MCF 10A (cell line): ENCODE measurements at regions of chr5 and their contacts with region 1.

Region 1: DNA sequence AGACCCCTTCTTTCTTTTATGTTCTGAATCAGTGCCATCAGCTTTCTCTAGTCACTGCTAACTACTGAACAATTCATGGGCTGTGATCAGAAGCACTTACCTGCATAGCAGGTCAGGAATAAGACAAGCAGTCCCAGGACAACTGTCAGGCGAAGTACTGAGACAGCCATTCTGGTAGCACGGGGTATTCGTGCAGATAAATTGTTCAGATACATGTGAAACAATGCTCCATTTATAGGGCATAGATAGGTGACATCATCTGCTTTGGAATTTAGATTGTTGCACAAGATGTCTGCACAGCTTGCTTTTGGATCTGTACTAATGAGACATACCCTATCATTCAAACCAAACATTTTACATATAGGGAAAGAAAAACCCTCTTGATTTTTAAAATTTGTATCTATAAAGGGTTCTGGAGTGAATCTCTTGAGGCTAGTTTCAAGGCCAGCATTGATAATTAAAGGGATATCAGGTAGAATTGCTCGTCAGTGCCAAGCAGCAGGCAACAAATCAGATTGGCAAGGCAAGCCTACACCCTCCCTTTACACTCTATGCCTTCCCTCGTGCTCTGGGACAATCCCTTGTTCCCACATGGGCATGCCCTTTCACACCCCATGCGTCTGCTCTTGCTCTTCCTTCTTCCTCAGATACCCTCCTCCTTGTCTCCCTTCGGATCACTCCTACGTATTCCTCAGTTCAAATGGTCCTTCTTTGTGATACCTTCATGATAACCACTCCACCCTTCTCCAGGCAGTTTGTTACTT is at the start of gene C5orf46:
- DNase-seq: peak; percentile 75
- H3K4me3 Mint-ChIP-seq: peak within 1 kb of the TSS; percentile 69
- H3K27ac Mint-ChIP-seq: peak within 1 kb of the TSS; percentile 85
- H3K4me1 Mint-ChIP-seq: peaks cover 39% of the 10 kb centered on the region
- H3K27me3 Mint-ChIP-seq: no peaks in the 10 kb centered on the region
- CTCF ChIP-seq: no peak
- total RNA-seq, gene C5orf46: 2.1 and 5.7 TPM in 2 replicates

Region 2: DNA sequence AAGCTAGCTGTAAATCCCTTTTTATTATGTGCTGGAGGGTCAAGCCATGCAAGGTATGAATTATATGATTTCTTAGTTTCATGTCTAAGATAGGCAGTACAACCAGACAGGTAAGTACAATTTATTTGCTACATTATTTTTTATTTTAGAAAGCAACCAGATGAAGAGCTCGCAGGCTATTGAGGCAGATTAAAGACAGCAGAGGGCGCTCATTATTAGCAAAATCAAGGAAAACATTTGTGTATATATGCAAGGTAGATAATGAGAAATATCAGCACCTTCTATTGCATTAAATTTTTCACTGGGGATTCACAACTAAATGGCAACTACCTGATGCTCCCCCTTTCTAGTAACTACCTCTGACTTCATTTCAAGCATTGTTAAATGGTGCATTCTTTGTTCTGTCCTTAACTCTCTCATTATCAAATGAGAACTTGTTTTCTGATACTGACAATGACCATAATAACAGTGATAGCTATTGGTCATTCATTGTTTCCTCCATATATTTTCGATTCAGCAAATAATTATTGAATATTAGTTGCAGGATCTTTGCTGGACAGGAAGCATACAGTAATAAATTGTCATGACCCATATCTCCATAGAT is 19.4 kb before region 1 on chr5:
- CTCF ChIA-PET with region 1: interaction called, 32 read pairs
- POLR2A ChIA-PET with region 1: interaction called, 5 read pairs
- intact Hi-C with region 1: loop called (anchors 2 kb)
- DNase-seq: peak; percentile 75
- H3K4me3 Mint-ChIP-seq: no peak overlapping the region
- H3K27ac Mint-ChIP-seq: no peak overlapping the region
- H3K4me1 Mint-ChIP-seq: peaks cover 16% of the 10 kb centered on the region
- H3K27me3 Mint-ChIP-seq: no peaks in the 10 kb centered on the region
- CTCF ChIP-seq: peak; percentile 76

Region 3: DNA sequence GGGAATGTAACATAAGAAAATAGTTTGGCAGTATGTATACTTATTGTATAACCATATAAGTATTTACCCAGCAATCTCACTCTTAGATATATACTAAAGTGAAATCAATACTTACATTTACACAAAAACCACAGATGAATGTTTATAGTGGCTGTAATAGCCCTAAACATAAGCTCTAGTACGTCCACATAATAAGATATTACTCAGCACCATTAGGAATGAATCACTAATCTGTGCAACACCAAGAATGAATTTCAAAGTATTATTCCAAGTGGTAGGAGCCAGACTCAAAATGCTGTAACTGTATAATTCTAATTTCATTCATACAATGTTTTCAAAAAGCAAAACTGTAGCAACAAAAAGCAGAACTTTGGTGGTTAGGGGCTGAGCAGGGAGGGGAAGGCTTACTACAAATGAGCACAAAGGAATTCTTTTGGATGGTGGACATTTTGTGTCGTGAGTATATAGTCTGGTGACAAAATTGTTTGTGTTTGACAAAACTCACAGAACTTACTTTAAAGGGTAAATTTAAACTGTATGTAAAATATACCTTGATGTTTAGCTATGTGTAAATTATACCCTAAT is 11.7 kb after region 1 on chr5:
- CTCF ChIA-PET with region 1: interaction called, 6 read pairs
- POLR2A ChIA-PET with region 1: interaction called, 10 read pairs
- intact Hi-C with region 1: no loop called
- DNase-seq: peak; percentile 39
- H3K4me3 Mint-ChIP-seq: no peak overlapping the region
- H3K27ac Mint-ChIP-seq: peak overlapping the region; percentile 56
- H3K4me1 Mint-ChIP-seq: peaks cover 37% of the 10 kb centered on the region
- H3K27me3 Mint-ChIP-seq: no peaks in the 10 kb centered on the region
- CTCF ChIP-seq: no peak

Region 4: DNA sequence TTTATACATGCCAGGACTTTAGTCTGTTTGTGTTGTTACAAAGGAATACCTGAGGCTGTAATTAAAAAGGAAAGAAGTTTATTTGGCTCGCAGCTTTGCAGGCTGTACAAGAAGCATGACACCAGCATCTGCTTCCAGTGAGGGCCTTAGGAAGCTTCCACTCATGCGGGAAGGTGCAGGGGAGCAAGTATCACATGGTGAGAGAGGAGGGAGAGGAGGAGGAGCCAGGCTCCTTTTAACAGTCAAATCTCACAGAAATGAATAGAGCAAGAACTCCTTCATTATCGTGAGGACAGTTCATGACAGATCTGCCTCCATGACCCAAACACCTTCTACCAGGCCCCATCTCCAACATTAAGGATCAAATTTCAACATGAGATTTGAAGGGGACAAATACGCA is 18.5 kb after region 1 on chr5:
- CTCF ChIA-PET with region 1: interaction called, 11 read pairs
- POLR2A ChIA-PET with region 1: interaction called, 5 read pairs
- intact Hi-C with region 1: no loop called
- DNase-seq: no peak
- H3K4me3 Mint-ChIP-seq: no peak overlapping the region
- H3K27ac Mint-ChIP-seq: no peak overlapping the region
- H3K4me1 Mint-ChIP-seq: no peaks in the 10 kb centered on the region
- H3K27me3 Mint-ChIP-seq: no peaks in the 10 kb centered on the region
- CTCF ChIP-seq: no peak